ENCODE measurements at regions of chr1 and their contacts with region 1.

Region 1: DNA sequence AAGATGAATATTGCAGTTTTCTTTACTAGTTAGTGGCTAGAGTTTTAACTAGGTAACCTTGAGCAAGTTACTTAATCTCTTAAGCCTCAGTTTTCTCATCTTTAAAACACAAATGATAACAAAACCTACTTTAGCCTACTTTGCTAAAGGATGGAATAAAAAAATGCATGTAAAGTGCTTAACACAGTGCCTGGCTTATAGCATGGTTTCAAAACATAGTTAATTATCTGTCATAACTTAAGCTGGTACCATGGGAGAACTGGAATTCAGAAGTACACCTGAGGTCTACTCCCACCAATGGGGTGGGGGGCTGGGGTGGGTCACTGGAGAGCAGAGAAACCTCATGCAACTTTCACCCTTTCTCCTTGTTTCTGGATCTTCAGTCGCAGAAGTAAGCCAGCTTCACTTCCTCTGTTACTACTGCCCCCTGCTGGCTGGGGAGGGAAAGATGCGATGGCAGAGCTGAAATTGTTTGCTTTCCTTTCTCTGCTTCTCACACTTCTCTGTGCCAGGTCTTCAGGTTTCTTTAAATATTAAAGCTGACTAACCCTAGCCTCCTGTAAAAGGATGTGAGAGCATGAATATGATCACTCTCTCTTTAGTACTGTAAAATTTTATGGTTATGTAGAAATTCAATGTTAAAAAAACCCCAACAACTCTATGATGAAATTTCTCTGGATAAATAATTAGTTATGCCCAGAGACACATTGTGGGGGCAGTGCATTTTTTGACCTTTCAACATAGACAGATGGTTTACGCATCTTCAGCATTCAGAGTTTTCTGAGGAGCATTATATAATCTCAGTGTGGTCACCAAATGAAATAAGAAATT is 324.2 kb downstream of the HLX start:
- DNase-seq: peak; percentile 47
- ATAC-seq: peak; percentile 63; the same call in 1 of the 2 replicates
- H3K4me3 ChIP-seq: no peak overlapping the region
- H3K27ac ChIP-seq: no peak overlapping the region
- H3K4me1 ChIP-seq: no peaks in the 10 kb centered on the region
- H3K27me3 ChIP-seq: no peaks in the 10 kb centered on the region
- CTCF ChIP-seq: peak; percentile 90

Region 2: GRCh38 chr1:220873868-220874655 is 329.4 kb before region 1 on chr1:
- CTCF ChIA-PET with region 1: no interaction called
- POLR2A ChIA-PET with region 1: no interaction called
- in situ Hi-C with region 1: no loop called
- intact Hi-C with region 1: loop called (anchors 2 kb)
- DNase-seq: peak; percentile 42
- ATAC-seq: peak; percentile 67
- H3K4me3 ChIP-seq: no peak overlapping the region
- H3K27ac ChIP-seq: no peak overlapping the region
- H3K4me1 ChIP-seq: no peaks in the 10 kb centered on the region
- H3K27me3 ChIP-seq: peaks cover 4% of the 10 kb centered on the region
- CTCF ChIP-seq: peak; percentile 81

Region 3: DNA sequence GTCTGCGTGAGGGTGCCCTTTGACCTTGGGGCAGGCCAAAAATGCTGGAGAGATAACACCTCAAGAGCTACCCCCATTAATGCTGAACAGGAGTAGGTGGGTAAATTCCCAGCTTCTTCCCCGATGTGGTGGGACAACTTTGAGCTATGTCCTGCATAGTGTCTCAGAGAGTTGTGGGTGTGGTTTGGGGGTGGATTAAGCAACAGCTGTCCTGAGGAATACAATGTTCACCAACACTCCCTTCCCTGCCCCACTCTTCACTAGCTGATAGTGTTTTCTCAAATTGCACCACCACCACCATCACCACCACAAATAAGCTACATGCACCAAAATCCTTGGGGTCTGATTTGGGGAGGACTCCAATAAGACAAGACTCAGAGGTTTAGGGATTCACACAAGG is 65.8 kb before region 1 on chr1:
- CTCF ChIA-PET with region 1: no interaction called
- POLR2A ChIA-PET with region 1: no interaction called
- in situ Hi-C with region 1: no loop called
- intact Hi-C with region 1: loop called (anchors 2 kb)
- DNase-seq: no peak
- ATAC-seq: no peak
- H3K4me3 ChIP-seq: no peak overlapping the region
- H3K27ac ChIP-seq: no peak overlapping the region
- H3K4me1 ChIP-seq: no peaks in the 10 kb centered on the region
- H3K27me3 ChIP-seq: no peaks in the 10 kb centered on the region
- CTCF ChIP-seq: no peak

Region 4: DNA sequence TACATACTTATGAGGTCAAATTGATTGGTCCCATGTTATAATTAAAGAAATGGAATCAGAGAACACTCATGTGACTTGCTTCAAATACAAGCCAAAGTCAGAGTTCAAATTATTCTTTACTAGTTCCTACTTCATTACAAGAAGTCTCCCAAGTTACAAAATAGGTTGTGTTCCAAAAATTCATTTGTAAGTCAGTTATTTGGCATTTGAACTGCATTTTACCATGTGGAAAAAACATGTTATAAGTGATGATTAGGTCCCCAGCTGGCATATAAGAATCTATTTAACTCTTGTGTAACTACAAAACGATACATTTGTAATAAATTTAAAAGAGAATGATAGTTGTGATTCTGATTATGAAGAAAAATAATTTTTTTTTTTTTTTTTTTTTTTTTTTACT is 1735.5 kb after region 1 on chr1:
- CTCF ChIA-PET with region 1: interaction called, 10 read pairs
- POLR2A ChIA-PET with region 1: no interaction called
- in situ Hi-C with region 1: no loop called
- intact Hi-C with region 1: no loop called
- DNase-seq: no peak
- ATAC-seq: no peak
- H3K4me3 ChIP-seq: no peak overlapping the region
- H3K27ac ChIP-seq: no peak overlapping the region
- H3K4me1 ChIP-seq: no peaks in the 10 kb centered on the region
- H3K27me3 ChIP-seq: no peaks in the 10 kb centered on the region
- CTCF ChIP-seq: no peak

Measured in Panc1 (cell line).